Activated CD8-positive, alpha-beta T cell treated with anti-CD3 and anti-CD28 coated beads for 36 hours (primary cell): ENCODE measurements at regions of chr6 and their contacts with region 1.

Region 1: GRCh38 chr6:117602151-117602898 is at the start of gene GOPC:
- DNase-seq: peak; percentile 95
- ATAC-seq: peak; percentile 95
- H3K4me3 Mint-ChIP-seq: peak within 1 kb of the TSS; percentile 98
- H3K27ac Mint-ChIP-seq: peak within 1 kb of the TSS; percentile 98
- H3K4me1 Mint-ChIP-seq: peaks cover 23% of the 10 kb centered on the region
- H3K27me3 Mint-ChIP-seq: peaks cover 1% of the 10 kb centered on the region
- CTCF ChIP-seq: no peak
- total RNA-seq, gene GOPC: 14.8 to 16.1 TPM

Region 2: GRCh38 chr6:117346142-117346930 is 256.0 kb before region 1 on chr6:
- CTCF ChIA-PET with region 1: interaction called, 4 read pairs
- POLR2A ChIA-PET with region 1: no interaction called
- intact Hi-C with region 1: loop called (anchors 5 kb)
- DNase-seq: no peak
- ATAC-seq: peak; percentile 39
- H3K4me3 Mint-ChIP-seq: no peak overlapping the region
- H3K27ac Mint-ChIP-seq: no peak overlapping the region
- H3K4me1 Mint-ChIP-seq: no peaks in the 10 kb centered on the region
- H3K27me3 Mint-ChIP-seq: peaks cover 7% of the 10 kb centered on the region
- CTCF ChIP-seq: peak; percentile 65

Region 3: DNA sequence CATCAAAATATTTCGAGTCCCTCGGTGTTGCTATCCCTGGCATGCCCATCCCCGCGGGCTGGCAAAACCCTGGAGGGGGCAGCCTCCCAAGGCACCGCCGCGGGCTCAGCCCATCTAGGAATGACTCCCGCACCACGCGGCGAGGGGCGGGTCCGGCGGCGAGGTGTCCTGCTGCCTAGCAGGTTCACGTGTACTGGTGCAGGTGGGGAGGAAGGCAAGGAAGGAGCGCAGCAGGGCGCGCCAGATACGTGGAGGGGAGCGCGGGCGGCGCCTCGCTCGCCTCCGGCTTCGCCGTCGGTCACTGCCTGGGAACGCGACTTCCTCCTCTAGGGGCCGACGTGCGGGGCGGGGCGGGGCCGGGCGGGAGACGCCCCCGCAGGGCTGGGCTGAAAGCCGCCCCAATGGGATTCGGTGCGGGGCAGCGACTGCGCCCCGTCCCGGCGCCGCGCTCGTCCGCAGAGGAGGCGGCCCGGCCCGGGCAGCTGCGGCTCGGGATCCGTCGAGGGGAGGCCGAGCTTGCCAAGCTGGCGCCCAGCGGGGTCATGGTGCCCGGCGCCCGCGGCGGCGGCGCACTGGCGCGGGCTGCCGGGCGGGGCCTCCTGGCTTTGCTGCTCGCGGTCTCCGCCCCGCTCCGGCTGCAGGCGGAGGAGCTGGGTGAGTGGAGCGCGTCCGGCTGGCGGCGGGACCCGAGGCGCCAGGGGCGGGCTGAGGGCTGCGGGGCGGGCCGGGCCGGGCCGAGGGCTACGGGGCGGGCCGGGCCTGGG is 119.9 kb before region 1 on chr6 and contains the start of gene DCBLD1:
- CTCF ChIA-PET with region 1: interaction called, 30 read pairs
- POLR2A ChIA-PET with region 1: interaction called, 15 read pairs
- intact Hi-C with region 1: no loop called
- DNase-seq: peak; percentile 57
- ATAC-seq: peak; percentile 82
- H3K4me3 Mint-ChIP-seq: peak within 1 kb of the TSS; percentile 80
- H3K27ac Mint-ChIP-seq: peak within 1 kb of the TSS; percentile 56
- H3K4me1 Mint-ChIP-seq: peaks cover 13% of the 10 kb centered on the region
- H3K27me3 Mint-ChIP-seq: peaks cover 43% of the 10 kb centered on the region
- CTCF ChIP-seq: no peak
- total RNA-seq, gene DCBLD1: 2.2 to 2.3 TPM

Region 4: GRCh38 chr6:117555882-117556498 is 46.3 kb before region 1 on chr6:
- CTCF ChIA-PET with region 1: interaction called, 36 read pairs
- POLR2A ChIA-PET with region 1: interaction called, 7 read pairs
- intact Hi-C with region 1: no loop called
- DNase-seq: peak; percentile 73
- ATAC-seq: peak; percentile 37
- H3K4me3 Mint-ChIP-seq: no peak overlapping the region
- H3K27ac Mint-ChIP-seq: no peak overlapping the region
- H3K4me1 Mint-ChIP-seq: peaks cover 8% of the 10 kb centered on the region
- H3K27me3 Mint-ChIP-seq: no peaks in the 10 kb centered on the region
- CTCF ChIP-seq: peak; percentile 87

Region 5: GRCh38 chr6:117624869-117625481 is 22.6 kb after region 1 on chr6:
- CTCF ChIA-PET with region 1: interaction called, 10 read pairs
- POLR2A ChIA-PET with region 1: interaction called, 3 read pairs
- intact Hi-C with region 1: no loop called
- DNase-seq: no peak
- ATAC-seq: no peak
- H3K4me3 Mint-ChIP-seq: no peak overlapping the region
- H3K27ac Mint-ChIP-seq: no peak overlapping the region
- H3K4me1 Mint-ChIP-seq: no peaks in the 10 kb centered on the region
- H3K27me3 Mint-ChIP-seq: peaks cover 2% of the 10 kb centered on the region
- CTCF ChIP-seq: no peak